ENCODE measurements at regions of chr12 and their contacts with region 1.

Region 1: GRCh38 chr12:101931498-101932326 is 54.3 kb downstream of the DRAM1 start:
- DNase-seq: peak; percentile 82
- ATAC-seq: peak; percentile 26
- H3K4me3 ChIP-seq: peak overlapping the region; percentile 71
- H3K27ac ChIP-seq: peak overlapping the region; percentile 98
- H3K4me1 ChIP-seq: peaks cover 62% of the 10 kb centered on the region
- H3K27me3 ChIP-seq: no peaks in the 10 kb centered on the region
- CTCF ChIP-seq: no peak
- EP300 ChIP-seq: peak; percentile 78 to 85; a peak in 3 of 4 replicates
- POLR2A ChIP-seq: peak; percentile 74
- RAD21 ChIP-seq: no peak

Region 2: GRCh38 chr12:101857043-101857558 is 74.6 kb before region 1 on chr12:
- CTCF ChIA-PET with region 1: interaction called, 3 read pairs
- POLR2A ChIA-PET with region 1: interaction called, 5 read pairs
- RAD21 ChIA-PET with region 1: no interaction called
- SMC1A ChIA-PET with region 1: interaction called, 4 read pairs
- in situ Hi-C with region 1: no loop called
- intact Hi-C with region 1: loop called (anchors 2 kb)
- DNase-seq: no peak
- ATAC-seq: peak; percentile 49
- H3K4me3 ChIP-seq: no peak overlapping the region
- H3K27ac ChIP-seq: peak overlapping the region; percentile 75
- H3K4me1 ChIP-seq: peaks cover 64% of the 10 kb centered on the region
- H3K27me3 ChIP-seq: no peaks in the 10 kb centered on the region
- CTCF ChIP-seq: no peak
- EP300 ChIP-seq: peak; percentile 40 to 64; a peak in 3 of 4 replicates
- POLR2A ChIP-seq: no peak
- RAD21 ChIP-seq: no peak

Region 3: DNA sequence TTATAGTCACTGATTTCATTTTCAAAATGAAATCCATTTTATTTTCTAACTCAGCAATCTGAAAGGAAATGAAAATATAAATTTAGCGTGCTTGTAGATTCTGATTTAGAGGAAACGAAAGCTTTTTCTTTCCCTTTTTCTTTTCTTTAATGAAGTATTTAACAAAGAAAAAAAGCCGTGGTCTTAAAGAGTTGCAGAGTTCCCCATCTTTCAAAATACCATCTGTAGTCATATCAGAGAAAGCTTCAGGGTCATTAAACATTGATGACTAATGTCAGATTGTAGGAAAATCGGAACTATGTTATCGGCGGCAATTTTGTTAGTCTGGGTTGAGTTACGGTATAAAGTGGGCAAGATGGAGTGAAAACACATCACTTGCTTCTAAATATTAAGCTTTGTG is 22.1 kb before region 1 on chr12:
- CTCF ChIA-PET with region 1: interaction called, 7 read pairs
- POLR2A ChIA-PET with region 1: interaction called, 6 read pairs
- RAD21 ChIA-PET with region 1: interaction called, 12 read pairs
- SMC1A ChIA-PET with region 1: interaction called, 7 read pairs
- in situ Hi-C with region 1: no loop called
- intact Hi-C with region 1: no loop called
- DNase-seq: no peak
- ATAC-seq: peak; percentile 82
- H3K4me3 ChIP-seq: peak overlapping the region; percentile 43; the same call in 1 of the 2 replicates
- H3K27ac ChIP-seq: peak overlapping the region; percentile 88
- H3K4me1 ChIP-seq: peaks cover 31% of the 10 kb centered on the region
- H3K27me3 ChIP-seq: no peaks in the 10 kb centered on the region
- CTCF ChIP-seq: no peak
- EP300 ChIP-seq: peak in 1 of 2 experiments; percentile 22; a peak in 1 of 4 replicates
- POLR2A ChIP-seq: no peak
- RAD21 ChIP-seq: no peak

Region 4: DNA sequence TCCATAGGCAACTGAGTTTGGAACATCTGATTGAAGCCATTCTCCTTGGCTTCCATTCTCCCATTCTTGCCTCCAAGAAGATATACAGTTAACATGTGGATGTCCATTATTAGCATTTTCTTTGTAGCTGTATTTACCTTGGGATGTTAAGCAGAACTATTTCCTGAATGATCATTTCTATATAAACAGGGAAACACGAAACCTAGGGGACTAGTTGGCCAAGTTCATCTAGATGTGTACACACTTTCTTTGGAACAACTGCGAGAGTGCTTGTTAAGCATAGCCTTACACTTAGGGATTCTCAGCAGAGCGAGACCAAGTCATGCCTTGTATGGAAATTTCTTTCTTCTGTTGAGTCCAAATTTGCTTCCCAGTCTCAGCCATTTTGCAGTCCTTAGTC is 12.3 kb before region 1 on chr12:
- CTCF ChIA-PET with region 1: interaction called, 72 read pairs
- POLR2A ChIA-PET with region 1: interaction called, 13 read pairs
- RAD21 ChIA-PET with region 1: interaction called, 23 read pairs
- SMC1A ChIA-PET with region 1: interaction called, 98 read pairs
- in situ Hi-C with region 1: no loop called
- intact Hi-C with region 1: loop called (anchors 1 kb)
- DNase-seq: no peak
- ATAC-seq: no peak
- H3K4me3 ChIP-seq: no peak overlapping the region
- H3K27ac ChIP-seq: no peak overlapping the region
- H3K4me1 ChIP-seq: peaks cover 26% of the 10 kb centered on the region
- H3K27me3 ChIP-seq: no peaks in the 10 kb centered on the region
- CTCF ChIP-seq: no peak
- EP300 ChIP-seq: no peak
- POLR2A ChIP-seq: no peak
- RAD21 ChIP-seq: no peak

Region 5: DNA sequence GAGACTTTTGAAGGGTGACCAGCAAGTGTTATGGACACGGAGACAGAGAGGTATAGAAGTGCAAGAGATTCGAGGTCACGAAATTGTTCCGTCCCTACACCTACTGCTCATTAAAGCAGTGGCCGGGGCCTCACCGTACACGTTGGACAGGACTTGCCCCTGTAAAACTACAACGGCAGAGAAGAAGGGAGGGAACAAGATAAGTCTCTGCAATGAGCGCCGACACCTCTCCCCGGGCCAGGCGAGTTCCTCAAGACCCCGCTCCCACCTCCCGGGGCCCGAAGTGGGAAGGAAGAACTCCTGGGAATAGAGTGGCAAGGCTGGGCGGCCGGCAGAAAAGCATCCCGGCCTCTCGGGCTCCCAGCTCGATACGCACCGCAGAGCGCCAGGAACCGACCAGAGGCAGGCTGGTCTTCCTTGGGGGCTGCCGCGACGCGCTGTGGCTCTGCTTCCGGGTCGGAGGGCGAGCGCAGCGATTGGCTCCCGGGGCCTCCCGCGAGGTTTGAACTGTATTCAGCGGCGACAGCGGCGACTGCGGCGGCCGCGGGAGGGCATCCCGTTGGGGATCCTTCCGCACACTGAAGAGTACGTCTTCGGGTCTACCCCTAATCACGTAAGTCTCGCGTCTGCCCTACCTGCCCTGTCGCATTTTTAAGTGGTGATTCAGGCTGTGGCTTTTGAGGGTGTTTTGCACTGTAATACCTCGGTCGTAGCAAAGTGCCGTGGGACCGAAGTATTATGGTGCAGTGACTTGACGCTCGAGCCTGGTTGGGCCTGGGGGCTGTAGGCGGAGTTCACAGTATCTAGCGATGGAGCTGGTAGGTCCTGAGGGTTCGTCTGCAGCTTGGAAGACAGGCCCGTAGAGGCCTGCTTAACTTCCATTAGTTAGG is 188.2 kb after region 1 on chr12 and contains the starts of genes NUP37 and PARPBP:
- CTCF ChIA-PET with region 1: no interaction called
- POLR2A ChIA-PET with region 1: interaction called, 5 read pairs
- RAD21 ChIA-PET with region 1: interaction called, 3 read pairs
- SMC1A ChIA-PET with region 1: interaction called, 3 read pairs
- in situ Hi-C with region 1: no loop called
- intact Hi-C with region 1: loop called (anchors 5 kb)
- DNase-seq: peak; percentile 68
- ATAC-seq: peak; percentile 95
- H3K4me3 ChIP-seq: peak within 1 kb of the TSS; percentile 88
- H3K27ac ChIP-seq: peak within 1 kb of the TSS; percentile 86
- H3K4me1 ChIP-seq: no peaks in the 10 kb centered on the region
- H3K27me3 ChIP-seq: no peaks in the 10 kb centered on the region
- CTCF ChIP-seq: peak in 1 of 3 experiments; percentile 8; a peak in 1 of 6 replicates
- EP300 ChIP-seq: 0 out of 4 replicates have a peak, but pooled peaks of 1 of the 2 experiments have one; percentile 6
- POLR2A ChIP-seq: peak; percentile 95
- RAD21 ChIP-seq: no peak
- polyA plus RNA-seq, gene NUP37: 191 to 250 TPM
- polyA plus RNA-seq, gene PARPBP: 29.2 to 40.3 TPM

Measured in GM12878 (cell line).